GM10248 (cell line): ENCODE measurements at regions of chr17 and their contacts with region 1.

Region 1: DNA sequence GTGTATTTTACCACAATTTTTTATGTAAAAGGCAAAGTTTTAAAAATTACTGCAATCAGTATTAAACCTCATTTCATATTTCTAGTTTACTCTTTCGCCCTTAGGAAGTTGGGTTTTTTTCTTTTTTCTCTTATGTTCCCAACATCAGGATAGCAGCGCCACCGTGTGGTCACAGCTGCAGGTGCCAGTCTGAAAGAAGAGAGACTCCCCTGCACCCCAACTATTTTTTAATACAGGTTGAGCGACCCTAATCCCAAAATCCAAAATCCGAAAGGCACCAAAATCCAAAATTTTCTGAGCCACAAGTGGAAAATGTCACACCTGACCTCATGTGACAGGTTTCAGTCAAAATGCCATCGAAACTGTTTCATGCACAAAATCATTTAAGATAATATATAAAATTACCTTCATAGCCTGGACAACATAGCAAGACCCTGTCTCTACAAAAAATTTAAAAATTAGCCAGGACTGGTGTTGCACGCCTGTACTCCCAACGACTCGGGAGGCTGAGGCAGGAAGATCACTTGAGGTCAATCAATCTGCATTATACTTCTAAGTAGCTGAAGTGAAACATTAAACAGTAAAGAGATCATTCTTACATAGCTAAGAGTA is 21.8 kb upstream of the ASGR2 start:
- DNase-seq: peak; percentile 78
- CTCF ChIP-seq: peak; percentile 88

Region 2: GRCh38 chr17:7060165-7060891 is 76.0 kb before region 1 on chr17:
- CTCF ChIA-PET with region 1: interaction called, 247 read pairs
- POLR2A ChIA-PET with region 1: no interaction called
- DNase-seq: no peak
- CTCF ChIP-seq: no peak

Region 3: GRCh38 chr17:7122381-7122780 is 14.0 kb before region 1 on chr17:
- CTCF ChIA-PET with region 1: interaction called, 17 read pairs
- POLR2A ChIA-PET with region 1: interaction called, 7 read pairs
- DNase-seq: no peak
- CTCF ChIP-seq: no peak